ENCODE measurements at regions of chr19 and their contacts with region 1.

Region 1: DNA sequence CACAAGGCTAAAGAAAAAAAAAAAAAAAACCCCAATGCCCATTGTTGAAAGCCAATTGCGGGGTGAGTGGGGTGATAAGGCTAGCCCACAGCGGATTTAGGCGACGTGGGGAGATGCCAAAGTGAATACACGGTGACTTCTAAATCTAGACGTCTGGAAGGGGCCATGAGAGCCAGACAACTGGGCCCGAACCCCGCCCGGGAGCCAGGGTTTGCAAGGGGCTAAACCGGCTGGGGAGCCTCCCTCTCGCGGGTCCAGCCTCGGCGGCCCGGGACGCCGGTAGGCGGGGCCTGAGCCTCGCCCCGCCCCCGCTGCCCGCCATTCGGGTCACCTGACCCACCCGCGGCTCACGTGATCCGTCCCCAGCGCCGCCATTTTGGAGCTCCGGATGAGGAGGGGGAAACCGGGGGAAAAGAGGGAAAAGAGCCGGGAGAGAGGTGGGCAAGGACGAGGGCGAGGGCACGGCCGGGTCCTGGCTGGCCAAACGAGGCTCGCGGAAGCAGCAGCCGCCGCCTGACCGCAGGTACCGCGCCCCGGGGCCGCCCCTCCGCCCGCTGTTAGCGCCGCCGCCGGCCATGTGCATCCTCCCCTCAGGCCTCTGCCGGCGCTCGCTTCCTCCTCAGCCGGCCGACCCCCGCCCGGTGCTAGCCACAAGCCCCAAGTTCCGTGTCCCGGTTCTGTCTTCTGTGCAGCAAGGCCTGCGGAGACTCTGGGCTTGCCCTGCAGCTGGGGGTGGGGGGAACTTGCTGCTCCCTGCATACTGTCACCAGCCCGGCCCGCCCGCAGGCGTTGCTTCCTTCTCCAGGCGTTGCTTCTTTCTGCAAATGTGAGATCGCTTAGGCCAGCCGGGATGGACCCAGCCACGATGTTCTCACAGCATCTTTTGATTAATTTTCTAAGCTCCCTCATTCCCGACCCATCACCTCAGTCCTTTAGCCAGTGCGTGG is at the start of gene ZNF507:
- DNase-seq: peak; percentile 94
- H3K4me3 ChIP-seq: peak within 1 kb of the TSS; percentile 85 to 100 (median 99)
- H3K27ac ChIP-seq: peak within 1 kb of the TSS; percentile 81 to 91 (median 85)
- H3K4me1 ChIP-seq: peaks cover 30 to 60% (median 44%) of the 10 kb centered on the region in 6 donors
- H3K27me3 ChIP-seq: peaks cover 0 to 34% (median 0%) of the 10 kb centered on the region in 7 donors
- CTCF ChIP-seq: no peak
- POLR2A ChIP-seq: peak in 2 of 3 donors; percentile 22 to 46
- total RNA-seq, gene ZNF507: 20.4 to 31.4 (median 25.6) TPM

Region 2: DNA sequence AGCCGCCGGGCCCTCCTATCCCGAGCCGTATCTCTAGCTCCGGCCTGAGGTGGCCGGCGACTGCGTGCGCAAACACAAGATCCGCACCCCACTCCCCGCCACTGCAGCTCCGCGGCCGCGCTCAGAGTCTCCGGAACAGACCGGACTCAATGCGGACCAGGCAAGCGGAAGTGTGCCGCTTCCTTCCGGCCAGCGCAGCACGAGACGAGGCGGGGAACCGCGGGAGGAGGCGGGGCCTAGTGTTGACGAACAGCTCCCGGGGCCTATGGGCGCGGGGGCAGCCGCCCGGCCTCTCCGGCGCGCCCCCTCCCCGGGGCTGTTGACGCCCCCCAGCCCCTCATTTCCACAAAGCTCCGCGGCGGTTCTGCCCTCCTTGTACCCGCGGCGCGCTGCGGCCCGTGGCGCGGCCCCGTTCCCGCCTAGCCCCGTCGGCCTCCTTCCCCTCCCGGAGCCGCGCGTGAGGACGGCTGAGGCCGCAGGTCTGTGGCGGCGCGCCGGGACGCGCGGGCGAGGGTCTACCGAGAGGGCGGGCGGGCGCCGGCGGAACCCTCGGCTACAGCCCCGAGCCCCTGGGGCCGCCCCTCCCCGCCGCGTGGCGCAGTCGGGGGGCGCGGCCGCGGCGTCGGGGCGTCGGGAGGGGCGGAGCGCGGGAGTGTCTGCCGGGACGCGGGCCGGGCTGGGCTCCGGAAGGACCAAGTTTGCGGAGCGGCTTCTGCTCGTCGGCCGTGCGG is 60.1 kb after region 1 on chr19 and contains the start of gene DPY19L3:
- intact Hi-C with region 1: loop called (anchors 10 kb)
- DNase-seq: peak; percentile 98
- H3K4me3 ChIP-seq: peak within 1 kb of the TSS; percentile 55 to 88 (median 76)
- H3K27ac ChIP-seq: peak within 1 kb of the TSS; percentile 89 to 100 (median 98)
- H3K4me1 ChIP-seq: peaks cover 12 to 41% (median 34%) of the 10 kb centered on the region in 6 donors
- H3K27me3 ChIP-seq: no peaks in the 10 kb centered on the region
- CTCF ChIP-seq: peak in 3 of 11 experiments; percentile 8 to 25 (median 14)
- POLR2A ChIP-seq: peak; percentile 3 to 91 (median 76)
- total RNA-seq, gene DPY19L3: 29.0 to 57.5 (median 46.0) TPM